ENCODE measurements at regions of chr13 and their contacts with region 1.

Region 1: DNA sequence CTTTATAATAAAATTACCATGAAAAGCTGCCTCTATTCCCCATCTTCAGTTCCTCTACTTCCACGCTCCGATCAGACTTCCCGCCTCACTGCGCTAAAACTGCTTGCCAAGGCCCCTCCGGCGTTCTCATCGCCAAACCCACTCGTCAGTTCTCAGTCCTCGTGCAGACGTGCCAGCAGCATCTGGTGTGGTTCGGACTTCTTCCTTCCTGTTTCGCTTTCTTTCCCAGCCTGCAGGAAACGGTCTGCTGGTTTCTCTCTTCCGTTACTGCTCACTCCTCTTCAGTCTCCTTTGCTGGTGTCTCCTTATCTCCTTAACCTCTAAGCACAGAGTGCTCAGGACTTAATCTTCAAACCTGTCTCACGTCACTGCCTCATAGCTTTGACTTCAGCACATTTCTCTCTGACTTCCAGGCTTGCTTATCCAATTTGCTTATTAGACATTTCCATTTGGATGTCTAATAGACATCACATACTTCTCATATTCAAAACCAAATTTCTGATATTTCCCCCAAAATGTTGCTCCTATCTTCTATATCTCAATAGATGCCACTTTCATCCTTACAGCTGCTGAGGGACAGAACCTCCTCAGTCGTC is 40.3 kb downstream of the RCBTB2 start:
- DNase-seq: peak; percentile 35 to 86 (median 76)
- ATAC-seq: peak; percentile 86
- H3K4me3 ChIP-seq: peak overlapping the region; percentile 8 to 37
- H3K27ac ChIP-seq: peak overlapping the region; percentile 77 to 91
- H3K4me1 ChIP-seq: peaks cover 10 to 68% of the 10 kb centered on the region in 2 donors
- H3K27me3 ChIP-seq: no peaks in the 10 kb centered on the region
- CTCF ChIP-seq: no peak

Region 2: GRCh38 chr13:48412881-48413351 is 79.7 kb before region 1 on chr13 and contains the start of gene LPAR6:
- intact Hi-C with region 1: loop called in 1 of 2 experiments (anchors 10 kb)
- DNase-seq: peak in 2 of 4 donors; percentile 66 to 79
- ATAC-seq: peak; percentile 76
- H3K4me3 ChIP-seq: peak within 1 kb of the TSS; percentile 35 to 54
- H3K27ac ChIP-seq: peak within 1 kb of the TSS; percentile 76 to 86
- H3K4me1 ChIP-seq: peaks cover 7 to 31% of the 10 kb centered on the region in 2 donors
- H3K27me3 ChIP-seq: no peaks in the 10 kb centered on the region
- CTCF ChIP-seq: no peak
- polyA plus RNA-seq, gene LPAR6: 44.6 to 59.0 (median 51.5) TPM

Region 3: DNA sequence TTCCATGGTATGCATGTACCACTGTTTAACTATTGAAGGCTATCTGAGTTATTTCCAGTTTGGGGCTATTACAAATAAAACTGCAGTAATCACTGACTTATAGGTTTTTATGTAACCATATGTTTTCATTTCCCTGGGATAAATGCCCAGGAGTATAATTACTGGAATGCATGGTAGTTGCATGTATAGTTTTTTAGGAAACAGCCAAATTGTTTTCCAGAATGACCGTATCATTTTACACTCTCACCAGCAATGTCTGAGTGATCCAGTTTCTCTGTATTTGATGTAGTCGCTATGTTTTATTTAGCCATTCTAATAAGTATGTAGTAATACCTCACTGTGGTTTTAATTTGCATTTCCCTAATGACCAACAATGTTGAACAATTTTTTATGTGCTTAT is 203.2 kb after region 1 on chr13:
- intact Hi-C with region 1: no loop called
- DNase-seq: peak in 2 of 4 donors; percentile 30 to 49
- ATAC-seq: no peak
- H3K4me3 ChIP-seq: no peak overlapping the region
- H3K27ac ChIP-seq: no peak overlapping the region
- H3K4me1 ChIP-seq: no peaks in the 10 kb centered on the region
- H3K27me3 ChIP-seq: peaks cover 0 to 5% of the 10 kb centered on the region in 2 donors
- CTCF ChIP-seq: no peak

Region 4: GRCh38 chr13:48783181-48783630 is 290.6 kb after region 1 on chr13:
- intact Hi-C with region 1: no loop called
- DNase-seq: peak; percentile 48 to 83 (median 81)
- ATAC-seq: peak; percentile 77
- H3K4me3 ChIP-seq: no peak overlapping the region
- H3K27ac ChIP-seq: peak overlapping the region in 1 of 2 donors; percentile 80
- H3K4me1 ChIP-seq: peaks cover 0 to 22% of the 10 kb centered on the region in 2 donors
- H3K27me3 ChIP-seq: no peaks in the 10 kb centered on the region
- CTCF ChIP-seq: no peak

Region 5: DNA sequence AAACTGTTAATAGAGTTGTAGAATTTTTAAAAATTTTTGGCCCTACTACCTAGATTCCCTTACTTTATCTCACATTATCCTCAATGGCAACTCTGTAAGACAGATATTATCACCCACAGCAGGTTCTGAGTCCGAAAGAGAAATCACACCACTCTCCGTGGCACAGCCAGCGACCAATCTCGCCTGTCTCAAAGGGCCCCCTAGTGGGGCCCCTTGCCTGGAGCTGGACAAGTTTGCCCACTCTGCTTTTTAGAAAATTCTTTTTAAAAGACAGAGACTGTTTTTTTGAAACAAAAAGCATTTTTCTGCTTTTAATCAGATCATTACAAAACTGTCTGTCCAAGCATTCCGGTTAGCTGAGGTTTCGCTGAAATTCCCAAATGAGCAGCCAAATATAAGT is 1024.9 kb after region 1 on chr13:
- intact Hi-C with region 1: no loop called
- DNase-seq: no peak
- ATAC-seq: no peak
- H3K4me3 ChIP-seq: no peak overlapping the region
- H3K27ac ChIP-seq: no peak overlapping the region
- H3K4me1 ChIP-seq: no peaks in the 10 kb centered on the region
- H3K27me3 ChIP-seq: no peaks in the 10 kb centered on the region
- CTCF ChIP-seq: no peak